ENCODE measurements at regions of chr10 and their contacts with region 1.

Region 1: GRCh38 chr10:63866075-63866746 is 345.0 kb downstream of the REEP3 start:
- DNase-seq: peak; percentile 43
- H3K4me3 ChIP-seq: no peak overlapping the region
- H3K27ac ChIP-seq: no peak overlapping the region
- H3K4me1 ChIP-seq: no peaks in the 10 kb centered on the region
- H3K27me3 ChIP-seq: no peaks in the 10 kb centered on the region
- CTCF ChIP-seq: peak; percentile 74

Region 2: GRCh38 chr10:63976538-63976937 is 110.3 kb after region 1 on chr10:
- intact Hi-C with region 1: loop called (anchors 5 kb)
- DNase-seq: peak; percentile 34
- H3K4me3 ChIP-seq: no peak overlapping the region
- H3K27ac ChIP-seq: no peak overlapping the region
- H3K4me1 ChIP-seq: no peaks in the 10 kb centered on the region
- H3K27me3 ChIP-seq: no peaks in the 10 kb centered on the region
- CTCF ChIP-seq: peak; percentile 41

Measured in colonic mucosa (tissue), 4 donors.